Astrocyte of the cerebellum (primary cell): ENCODE measurements at regions of chr1 and their contacts with region 1.

Region 1: DNA sequence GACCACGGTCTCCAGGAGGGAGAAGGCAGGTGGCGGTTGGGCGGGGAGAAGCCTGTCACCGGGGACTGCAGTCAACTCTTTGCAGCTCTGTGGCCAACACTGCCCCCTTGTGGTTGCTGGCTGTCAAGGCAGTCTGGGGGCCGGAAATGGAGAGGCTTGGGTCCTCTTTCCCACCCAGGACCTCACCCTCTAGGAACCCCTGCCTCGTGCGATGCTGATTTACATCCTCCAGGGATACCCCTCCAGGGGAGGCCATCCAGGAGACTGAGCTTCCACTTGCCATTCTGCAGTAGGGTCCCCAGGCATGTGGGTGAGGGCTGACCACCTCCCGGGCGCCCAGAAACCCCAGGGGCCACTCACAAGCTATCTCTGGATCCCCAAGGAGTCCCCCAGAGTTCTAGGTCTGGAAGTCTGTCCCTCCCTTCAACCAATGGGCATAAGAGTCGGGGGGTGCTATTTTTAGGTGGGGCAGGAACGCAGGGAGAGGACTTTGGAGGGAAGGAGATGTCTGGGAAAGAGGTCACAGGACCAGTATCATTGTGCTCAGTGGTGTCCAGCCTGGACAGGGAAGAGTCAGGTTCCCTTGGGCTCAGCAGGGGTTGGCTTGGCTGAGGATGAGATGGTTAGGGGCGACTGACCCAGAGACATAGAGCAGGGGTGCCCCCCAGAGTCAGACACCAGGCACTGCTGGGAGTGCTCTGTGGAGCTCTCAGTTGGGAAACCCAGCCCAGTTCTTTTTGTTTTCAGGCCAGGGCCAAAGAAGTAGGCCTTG is 7.1 kb upstream of the GPR61 start:
- DNase-seq: peak; percentile 31
- H3K4me3 ChIP-seq: no peak overlapping the region
- CTCF ChIP-seq: peak; percentile 97

Region 2: DNA sequence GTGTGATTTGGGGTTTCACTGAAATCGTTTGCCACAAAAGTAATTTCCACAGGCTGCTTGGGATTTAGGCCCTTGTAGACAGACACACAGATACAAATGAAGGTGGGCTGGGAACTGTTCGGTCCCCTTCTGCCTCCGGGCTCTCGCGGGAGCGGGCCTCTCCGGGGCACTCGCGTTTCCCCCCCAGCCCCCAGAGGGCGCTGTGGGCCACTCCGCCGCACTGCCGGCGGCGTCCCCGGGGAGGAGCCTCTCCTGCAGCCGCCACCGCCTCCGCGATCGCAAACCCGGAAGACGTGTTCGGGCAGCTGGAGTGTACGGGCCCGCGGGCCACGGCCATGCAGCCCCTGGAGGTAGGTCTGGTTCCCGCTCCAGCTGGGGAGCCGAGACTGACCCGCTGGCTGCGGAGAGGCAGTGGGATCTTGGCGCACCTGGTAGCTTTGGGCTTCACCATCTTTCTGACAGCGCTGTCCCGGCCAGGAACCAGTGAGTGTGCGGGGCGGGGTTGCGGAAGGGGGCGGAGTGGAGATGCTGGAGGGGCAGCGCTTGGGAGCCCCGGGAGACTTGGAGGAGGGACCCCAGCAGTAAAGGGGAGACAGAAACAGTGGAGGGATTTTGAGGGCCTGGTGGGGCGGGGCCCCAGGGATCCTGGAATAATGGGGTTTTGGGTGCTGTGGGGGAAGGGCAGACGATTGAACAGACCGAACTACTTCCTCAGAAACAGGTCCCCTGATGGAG is 38.6 kb before region 1 on chr1 and contains the start of gene CYB561D1:
- in situ Hi-C with region 1: loop called (anchors 5 kb)
- DNase-seq: peak; percentile 52
- H3K4me3 ChIP-seq: peak within 1 kb of the TSS; percentile 98
- CTCF ChIP-seq: peak; percentile 96

Region 3: GRCh38 chr1:109567877-109568672 is 35.5 kb after region 1 on chr1:
- in situ Hi-C with region 1: no loop called
- DNase-seq: no peak
- H3K4me3 ChIP-seq: no peak overlapping the region
- CTCF ChIP-seq: no peak

Region 4: GRCh38 chr1:109769335-109770029 is 236.9 kb after region 1 on chr1:
- in situ Hi-C with region 1: loop called (anchors 5 kb)
- DNase-seq: peak; percentile 58
- H3K4me3 ChIP-seq: no peak overlapping the region
- CTCF ChIP-seq: no peak